ENCODE measurements at regions of chr1 and their contacts with region 1.

Region 1: DNA sequence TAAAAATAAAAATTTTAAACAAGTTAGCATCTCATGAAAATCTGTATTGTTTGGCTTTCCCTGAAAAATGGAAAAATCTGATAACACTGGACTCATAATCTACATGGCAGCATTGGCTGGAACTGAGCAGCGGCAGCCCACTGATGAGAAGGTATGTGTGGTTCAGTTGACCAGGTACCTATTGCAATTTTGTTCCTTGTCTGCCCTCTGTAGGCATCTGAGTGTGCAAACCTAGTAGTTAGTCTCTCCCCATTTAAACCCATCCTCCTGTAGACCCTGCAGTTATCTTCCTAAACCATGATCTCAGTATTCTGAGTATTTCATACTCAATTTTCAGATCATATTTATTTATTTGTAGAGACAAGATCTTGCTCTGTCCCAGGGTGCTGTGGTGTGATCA is 59.4 kb upstream of the SERBP1 start:
- DNase-seq: no peak
- H3K4me3 ChIP-seq: no peak overlapping the region
- CTCF ChIP-seq: no peak
- POLR2A ChIP-seq: no peak

Region 2: DNA sequence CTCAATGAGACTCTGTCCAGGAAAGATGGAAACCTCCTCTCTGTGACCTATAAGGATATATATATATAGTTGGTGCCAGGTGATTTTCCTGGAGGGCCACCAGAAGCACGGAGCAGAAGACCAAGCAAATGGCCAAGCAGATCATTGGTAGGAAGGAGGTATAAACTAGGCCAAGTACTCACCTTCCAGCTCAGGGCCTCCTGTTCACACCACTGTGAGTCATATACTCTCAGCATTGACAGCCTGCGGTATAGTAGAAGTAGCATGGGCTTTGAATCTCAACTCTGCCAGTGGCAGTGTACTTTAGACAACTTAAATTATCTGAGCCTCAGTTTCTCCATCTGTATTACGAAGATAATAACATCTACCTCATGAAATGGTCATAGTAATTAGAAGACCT is 166.6 kb before region 1 on chr1:
- intact Hi-C with region 1: no loop called
- DNase-seq: no peak
- H3K4me3 ChIP-seq: no peak overlapping the region
- CTCF ChIP-seq: no peak
- POLR2A ChIP-seq: no peak

Region 3: GRCh38 chr1:67347688-67348472 is 141.8 kb before region 1 on chr1:
- intact Hi-C with region 1: loop called (anchors 5 kb)
- DNase-seq: peak in 1 of 2 donors; percentile 53
- H3K4me3 ChIP-seq: no peak overlapping the region
- CTCF ChIP-seq: peak in 1 of 3 donors; percentile 55
- POLR2A ChIP-seq: no peak

Region 4: GRCh38 chr1:67460676-67461500 is 28.8 kb before region 1 on chr1:
- intact Hi-C with region 1: no loop called
- DNase-seq: peak in 1 of 2 donors; percentile 32
- H3K4me3 ChIP-seq: no peak overlapping the region
- CTCF ChIP-seq: no peak
- POLR2A ChIP-seq: no peak

Measured in lower leg skin (tissue), 4 donors.